Dendritic cell treated with granulocyte-macrophage colony-stimulating factor and Interleukin-4, amounts not matched to agents 40 ng/mL and 50 ng/mL, for 4 days (primary cell): ENCODE measurements at regions of chr1 and their contacts with region 1.

Region 1: GRCh38 chr1:27884006-27884954 is 11.9 kb downstream of the THEMIS2 start:
- H3K4me3 Mint-ChIP-seq: peak overlapping the region; percentile 51
- H3K27ac Mint-ChIP-seq: peak overlapping the region; percentile 95
- H3K4me1 Mint-ChIP-seq: peaks cover 81% of the 10 kb centered on the region
- H3K27me3 Mint-ChIP-seq: no peaks in the 10 kb centered on the region

Region 2: DNA sequence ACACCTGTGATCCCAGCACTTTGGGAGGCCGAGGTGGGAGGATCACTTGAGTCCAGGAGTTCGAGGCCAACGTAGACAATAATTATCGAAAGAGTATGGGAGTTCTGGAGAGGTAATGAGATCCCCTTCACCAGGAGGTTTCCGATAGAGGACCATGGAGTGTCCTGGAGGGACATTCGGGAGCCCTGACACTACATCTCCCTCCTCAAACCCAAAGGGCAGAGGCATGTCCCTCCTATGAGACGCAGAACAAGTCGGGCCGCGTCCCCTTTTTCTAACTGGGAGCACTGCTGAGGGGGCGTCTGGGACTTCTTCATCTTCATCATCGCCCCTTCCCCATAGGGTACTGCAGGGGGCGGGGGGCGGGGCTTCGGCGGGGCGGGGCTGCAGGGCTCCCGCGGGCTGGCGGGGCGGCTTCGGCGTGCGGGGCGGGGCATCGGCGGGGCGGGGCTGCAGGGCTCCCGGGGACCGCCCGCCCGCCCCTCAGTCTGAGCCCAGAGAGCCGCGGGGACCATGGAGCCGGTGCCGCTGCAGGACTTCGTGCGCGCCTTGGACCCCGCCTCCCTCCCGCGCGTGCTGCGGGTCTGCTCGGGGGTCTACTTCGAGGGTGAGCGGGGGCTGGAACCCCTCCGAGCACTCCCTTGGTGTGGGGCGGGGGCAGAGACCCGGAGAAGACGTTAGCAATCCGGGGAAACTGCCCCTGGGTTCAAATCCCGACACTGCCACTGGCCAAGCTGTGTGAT is 12.1 kb before region 1 on chr1 and contains the start of gene THEMIS2:
- intact Hi-C with region 1: loop called (anchors 1 kb)
- H3K4me3 Mint-ChIP-seq: peak within 1 kb of the TSS; percentile 85
- H3K27ac Mint-ChIP-seq: peak within 1 kb of the TSS; percentile 84
- H3K4me1 Mint-ChIP-seq: peaks cover 59% of the 10 kb centered on the region
- H3K27me3 Mint-ChIP-seq: no peaks in the 10 kb centered on the region

Region 3: GRCh38 chr1:28028873-28029654 is 144.8 kb after region 1 on chr1:
- intact Hi-C with region 1: no loop called
- H3K4me3 Mint-ChIP-seq: no peak overlapping the region
- H3K27ac Mint-ChIP-seq: no peak overlapping the region
- H3K4me1 Mint-ChIP-seq: no peaks in the 10 kb centered on the region
- H3K27me3 Mint-ChIP-seq: no peaks in the 10 kb centered on the region